ENCODE measurements at regions of chr1 and their contacts with region 1.

Region 1: DNA sequence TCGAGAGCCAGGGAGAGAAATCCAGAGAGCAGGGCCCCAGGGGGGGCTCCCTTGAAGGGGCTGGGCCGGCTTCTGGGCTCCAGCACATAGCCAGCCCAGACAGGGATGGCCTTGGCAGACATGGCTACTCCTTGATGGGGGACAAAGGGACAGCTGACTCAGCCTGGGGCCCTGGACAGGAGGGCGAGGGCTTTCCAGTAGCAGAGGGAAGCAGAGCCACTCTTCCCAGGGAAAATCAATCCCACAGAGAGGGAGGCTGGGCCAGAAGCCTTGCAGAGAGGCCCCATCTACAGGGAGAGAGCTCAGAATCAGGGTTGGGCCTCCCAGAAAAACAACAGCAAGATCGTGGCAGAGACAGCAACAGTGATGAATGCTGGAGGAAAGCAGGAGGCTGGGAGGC is 15.6 kb downstream of the IGFN1 start:
- DNase-seq: no peak
- H3K4me3 ChIP-seq: no peak overlapping the region
- H3K27ac ChIP-seq: no peak overlapping the region
- H3K4me1 ChIP-seq: no peaks in the 10 kb centered on the region
- H3K27me3 ChIP-seq: no peaks in the 10 kb centered on the region
- CTCF ChIP-seq: no peak
- POLR2A ChIP-seq: no peak

Region 2: DNA sequence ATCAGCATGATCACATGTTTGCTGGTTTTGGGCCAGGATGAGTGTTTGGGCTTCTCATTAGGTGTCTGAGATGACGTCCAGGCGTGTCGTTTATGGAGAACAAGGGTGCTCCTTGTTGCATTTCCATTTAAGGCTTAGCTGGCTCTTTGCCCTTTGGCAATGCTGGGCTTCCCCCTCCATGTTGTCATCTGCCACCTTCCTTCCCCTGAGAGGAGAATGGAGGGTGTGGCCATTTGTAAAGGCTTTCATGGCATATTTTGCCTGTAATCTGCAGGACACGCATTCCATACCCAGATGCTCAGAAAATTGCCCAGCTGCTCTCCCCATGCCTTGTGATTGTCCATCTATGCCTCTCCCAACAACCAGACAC is 104.8 kb after region 1 on chr1:
- intact Hi-C with region 1: loop called (anchors 5 kb)
- DNase-seq: peak; percentile 58 to 94
- H3K4me3 ChIP-seq: no peak overlapping the region
- H3K27ac ChIP-seq: peak overlapping the region; percentile 97
- H3K4me1 ChIP-seq: peaks cover 19 to 48% of the 10 kb centered on the region in 2 donors
- H3K27me3 ChIP-seq: no peaks in the 10 kb centered on the region
- CTCF ChIP-seq: no peak
- POLR2A ChIP-seq: no peak

Measured in breast epithelium (tissue), 4 donors.